Posterior vena cava (tissue), 2 donors: ENCODE measurements at regions of chr3 and their contacts with region 1.

Region 1: GRCh38 chr3:45123030-45123429 is 23.1 kb downstream of the CDCP1 start:
- DNase-seq: no peak

Region 2: DNA sequence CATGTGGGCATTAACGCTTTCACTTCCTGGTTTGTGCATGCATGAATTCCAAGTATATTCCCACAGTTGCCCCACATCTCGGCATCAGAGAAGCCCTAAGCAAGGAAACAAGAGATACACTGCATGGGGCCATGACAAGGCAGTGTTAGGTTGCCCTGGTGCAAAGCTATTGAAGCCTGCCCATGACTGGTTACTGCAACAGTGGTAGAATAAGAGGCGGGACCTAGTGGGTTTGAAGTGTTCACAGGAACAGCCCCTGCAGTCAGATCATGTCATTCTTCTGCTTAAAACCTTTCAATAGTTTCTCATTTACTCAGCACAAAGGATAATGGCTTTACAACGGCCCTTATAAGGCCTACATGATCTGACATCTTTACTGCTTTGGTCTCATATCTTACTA is 962.2 kb before region 1 on chr3:
- intact Hi-C with region 1: loop called in 1 of 2 experiments (anchors 5 kb)
- DNase-seq: no peak

Region 3: DNA sequence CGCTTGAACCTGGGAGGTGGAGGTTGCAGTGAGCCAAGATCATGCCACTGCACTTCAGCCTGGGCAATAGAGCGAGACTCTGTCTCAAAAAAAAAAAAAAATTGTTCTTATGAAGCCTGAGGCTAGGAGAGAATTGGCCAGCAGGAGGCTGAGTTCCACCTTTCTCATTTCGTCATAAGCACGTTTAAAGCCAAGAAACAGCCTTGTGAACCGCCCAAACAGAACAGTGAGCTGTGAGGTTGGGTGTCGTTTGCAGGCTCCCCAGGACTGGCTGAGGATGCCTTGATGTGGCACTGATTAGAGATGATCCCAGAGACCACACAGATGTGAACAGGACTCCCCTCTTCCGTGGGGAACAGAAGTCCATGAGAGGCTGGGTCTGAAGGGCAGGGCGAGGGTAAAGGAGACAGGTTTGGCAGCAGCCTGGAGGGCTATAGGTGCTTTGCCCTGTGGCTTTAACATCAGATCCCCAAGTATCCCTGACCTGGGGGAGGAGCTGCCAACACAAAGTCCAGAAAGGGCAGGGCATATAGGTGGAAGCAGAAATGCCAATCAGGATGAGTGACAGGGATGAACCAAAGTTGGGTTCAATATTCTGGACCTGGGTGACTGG is 44.0 kb before region 1 on chr3:
- intact Hi-C with region 1: no loop called
- DNase-seq: no peak

Region 4: DNA sequence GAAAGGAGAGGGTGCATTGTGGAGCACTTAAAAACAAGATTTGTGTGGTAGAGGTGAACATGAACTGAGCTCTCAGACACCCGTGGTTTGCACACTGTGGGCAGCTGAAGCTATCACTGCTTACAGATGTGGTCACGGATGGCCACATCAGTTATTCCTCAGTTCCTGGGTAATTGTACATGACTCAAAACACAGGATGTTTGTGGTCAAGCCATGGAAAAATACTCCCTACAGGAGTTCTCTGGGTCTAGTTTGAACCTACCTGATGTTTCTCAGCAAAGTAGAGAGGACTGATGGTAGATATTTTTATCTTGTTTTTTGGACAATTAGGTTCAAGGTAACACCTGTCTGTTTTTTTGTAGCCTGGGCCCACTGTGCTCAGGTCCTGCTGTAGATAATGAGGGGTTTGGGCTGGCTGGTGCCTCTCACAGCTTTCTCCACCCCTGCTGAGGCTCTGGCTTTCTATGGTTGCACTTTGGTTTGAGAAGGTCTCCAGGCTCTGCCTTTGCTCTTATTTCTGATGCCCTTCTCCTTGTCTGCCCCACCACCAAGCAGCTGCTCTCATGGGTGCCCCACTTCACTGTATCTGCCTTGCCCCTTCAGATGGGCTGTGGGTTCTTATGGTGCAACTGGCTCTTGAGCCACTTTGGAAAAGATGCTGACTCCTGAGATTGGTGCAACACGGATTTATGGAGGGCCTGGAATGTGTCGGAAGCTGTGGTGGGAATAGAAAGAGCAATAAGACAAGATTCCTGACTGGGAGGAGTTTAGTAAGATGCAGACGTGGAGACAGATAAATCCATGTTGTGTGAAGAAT is 17.0 kb before region 1 on chr3:
- intact Hi-C with region 1: no loop called
- DNase-seq: no peak